ENCODE measurements at regions of chr22 and their contacts with region 1.

Region 1: GRCh38 chr22:25465949-25466348 is 98.5 kb upstream of the GRK3 start:
- DNase-seq: no peak

Region 2: GRCh38 chr22:25404928-25405816 is 60.8 kb before region 1 on chr22:
- in situ Hi-C with region 1: no loop called
- DNase-seq: peak; percentile 49

Region 3: DNA sequence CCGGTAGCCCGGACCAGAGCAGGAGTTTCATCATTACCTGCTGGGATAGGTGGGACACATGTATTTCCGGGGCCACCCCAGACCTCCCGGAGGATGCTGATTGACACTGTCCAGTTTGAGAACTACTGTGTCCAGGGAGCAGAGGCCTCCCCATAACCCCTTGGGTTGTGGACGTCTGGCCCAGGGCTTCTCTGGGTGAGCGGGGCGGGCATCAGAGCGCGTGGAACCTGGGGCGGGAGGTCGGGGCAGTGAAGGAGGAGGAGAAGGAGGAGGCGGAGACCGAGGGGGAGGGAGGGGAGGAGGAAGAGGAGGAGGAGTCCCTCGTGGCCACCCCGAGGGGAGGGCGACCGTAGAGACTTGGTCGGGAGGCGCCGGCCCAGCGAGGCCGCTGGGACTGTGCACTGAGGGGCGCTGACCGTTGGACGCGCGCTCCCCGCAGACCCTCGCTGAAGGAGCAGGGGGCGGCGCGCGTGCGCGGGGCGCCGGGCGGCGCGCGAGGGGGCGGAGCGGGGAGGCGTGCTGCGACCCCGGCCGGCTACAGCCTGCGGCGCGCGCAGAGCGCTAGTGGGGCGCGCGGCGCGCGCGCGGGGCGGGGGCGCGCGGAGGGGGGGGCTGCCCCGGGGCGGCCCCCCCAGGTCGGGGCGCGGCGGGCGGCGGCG is 98.5 kb after region 1 on chr22 and contains the start of gene GRK3:
- in situ Hi-C with region 1: no loop called
- DNase-seq: peak; percentile 76

Region 4: DNA sequence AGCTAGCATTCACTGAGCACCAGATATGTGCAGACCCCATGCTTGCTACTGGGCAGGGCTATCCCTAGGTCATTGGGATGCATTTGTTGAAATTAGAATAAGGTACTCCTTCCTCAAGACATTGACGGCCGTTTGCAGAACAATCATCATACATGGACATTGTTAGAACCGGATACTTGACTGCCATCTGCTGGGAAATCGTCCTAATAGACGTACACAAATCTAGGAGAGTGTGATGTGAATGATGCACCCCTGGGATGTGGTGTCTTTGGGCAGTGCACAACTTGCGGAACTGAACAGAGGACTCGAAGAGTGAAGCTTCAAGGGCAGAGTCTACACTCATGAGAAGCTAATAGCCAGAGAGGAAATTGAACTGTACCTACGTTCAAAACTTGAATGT is 311.9 kb after region 1 on chr22:
- in situ Hi-C with region 1: loop called (anchors 10 kb)
- DNase-seq: peak; percentile 38